PC-3 (cell line): ENCODE measurements at regions of chr10 and their contacts with region 1.

Region 1: DNA sequence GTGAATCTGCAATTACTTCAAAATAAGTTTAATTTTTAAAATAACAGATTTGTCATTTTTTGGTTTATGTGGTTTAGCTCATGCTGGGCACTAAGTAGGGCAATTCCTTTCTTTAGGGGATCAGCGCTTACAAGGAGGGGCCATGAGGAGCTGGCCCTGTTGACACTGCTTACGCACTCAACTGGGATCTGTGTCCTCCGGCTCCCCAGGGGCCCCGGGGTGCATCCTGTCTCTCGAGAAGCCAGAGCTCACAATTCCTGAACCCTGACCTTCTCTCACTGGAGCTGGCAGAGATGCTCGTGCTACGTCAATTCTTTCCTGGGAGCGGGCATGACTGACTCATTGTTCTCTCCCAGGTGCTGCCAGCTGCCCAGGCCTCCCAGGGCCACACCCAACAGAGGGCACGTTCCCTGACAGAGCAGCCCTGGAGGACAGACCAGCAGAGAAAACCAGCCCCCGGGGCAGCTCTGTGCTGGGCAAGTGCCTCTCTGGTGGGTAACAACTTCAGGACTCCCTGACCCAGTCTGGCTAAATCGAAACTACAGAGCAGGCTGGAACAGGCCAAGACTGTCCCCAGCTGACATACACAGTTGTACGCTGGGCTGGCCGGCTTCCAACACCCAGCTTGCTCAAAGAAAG is 36.8 kb downstream of the CTBP2 start:
- DNase-seq: peak; percentile 93
- ATAC-seq: peak; percentile 96
- H3K4me3 ChIP-seq: peak overlapping the region; percentile 38; the same call in 1 of the 2 replicates
- H3K27ac ChIP-seq: peak overlapping the region; percentile 96
- H3K4me1 ChIP-seq: peaks cover 38% of the 10 kb centered on the region
- H3K27me3 ChIP-seq: no peaks in the 10 kb centered on the region
- CTCF ChIP-seq: no peak

Region 2: GRCh38 chr10:125093199-125093973 is 30.2 kb before region 1 on chr10:
- CTCF ChIA-PET with region 1: no interaction called
- POLR2A ChIA-PET with region 1: interaction called, 10 read pairs
- intact Hi-C with region 1: no loop called
- DNase-seq: no peak
- ATAC-seq: no peak
- H3K4me3 ChIP-seq: no peak overlapping the region
- H3K27ac ChIP-seq: no peak overlapping the region
- H3K4me1 ChIP-seq: no peaks in the 10 kb centered on the region
- H3K27me3 ChIP-seq: no peaks in the 10 kb centered on the region
- CTCF ChIP-seq: no peak